Ascending aorta (tissue), 2 donors: ENCODE measurements at regions of chr19 and their contacts with region 1.

Region 1: DNA sequence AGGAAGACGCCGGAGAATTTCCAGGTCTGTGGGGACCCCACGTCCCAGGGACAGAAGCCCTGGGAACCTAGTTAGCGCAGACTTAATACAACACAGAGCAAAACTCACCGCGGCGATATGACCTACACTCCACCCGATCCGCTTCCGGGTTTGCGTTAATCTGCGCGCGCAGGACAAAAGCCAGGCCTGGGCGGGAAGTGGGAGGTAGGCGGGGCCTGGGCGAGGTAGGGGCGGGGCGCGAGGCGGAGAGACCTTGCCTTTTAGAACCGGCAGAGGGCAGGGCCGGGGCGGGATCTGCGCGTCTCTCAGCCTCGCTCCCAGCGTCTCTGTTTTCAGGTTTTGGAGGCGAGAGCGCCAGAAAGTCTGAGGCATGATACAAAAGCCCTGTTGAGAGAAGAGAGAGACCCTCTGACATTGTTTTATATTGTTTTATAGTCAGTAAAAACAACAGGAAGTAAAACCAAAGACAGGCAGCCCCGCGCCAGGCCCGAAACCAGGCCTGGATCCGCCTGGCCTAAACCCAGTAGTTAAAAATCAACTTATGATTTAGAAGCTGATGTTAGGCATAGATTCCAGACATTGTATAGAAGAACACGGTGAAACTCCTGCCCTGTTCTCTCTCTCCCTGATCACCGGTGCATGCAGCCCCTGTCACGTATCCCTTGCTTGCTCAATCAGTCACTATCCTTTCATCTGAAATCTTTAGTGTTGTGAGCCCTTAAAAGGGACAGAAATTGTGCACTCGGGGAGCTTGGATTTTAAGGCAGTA is at the start of gene ZNF611:
- DNase-seq: peak; percentile 86 to 99
- H3K4me3 ChIP-seq: peak within 1 kb of the TSS; percentile 81 to 82
- H3K27ac ChIP-seq: peak within 1 kb of the TSS; percentile 78 to 88
- H3K4me1 ChIP-seq: peaks cover 0 to 5% of the 10 kb centered on the region in 2 donors
- H3K27me3 ChIP-seq: no peaks in the 10 kb centered on the region
- CTCF ChIP-seq: peak; percentile 68 to 79 (median 74)
- total RNA-seq, gene ZNF611: 13.1 TPM

Region 2: GRCh38 chr19:52397310-52398080 is 337.6 kb before region 1 on chr19 and contains the start of gene ZNF528:
- intact Hi-C with region 1: loop called (anchors 10 kb)
- DNase-seq: peak; percentile 72 to 97
- H3K4me3 ChIP-seq: peak within 1 kb of the TSS; percentile 79 to 90
- H3K27ac ChIP-seq: peak within 1 kb of the TSS; percentile 64 to 84
- H3K4me1 ChIP-seq: peaks cover 7 to 15% of the 10 kb centered on the region in 2 donors
- H3K27me3 ChIP-seq: no peaks in the 10 kb centered on the region
- CTCF ChIP-seq: no peak
- total RNA-seq, gene ZNF528: 4.0 TPM

Region 3: GRCh38 chr19:52637718-52638585 is 97.1 kb before region 1 on chr19 and contains the start of gene ZNF83:
- intact Hi-C with region 1: loop called (anchors 2 kb)
- DNase-seq: peak; percentile 92 to 99
- H3K4me3 ChIP-seq: peak within 1 kb of the TSS; percentile 62 to 77
- H3K27ac ChIP-seq: peak within 1 kb of the TSS; percentile 87 to 92
- H3K4me1 ChIP-seq: peaks cover 0 to 14% of the 10 kb centered on the region in 2 donors
- H3K27me3 ChIP-seq: no peaks in the 10 kb centered on the region
- CTCF ChIP-seq: no peak
- total RNA-seq, gene ZNF83: 29.1 TPM

Region 4: DNA sequence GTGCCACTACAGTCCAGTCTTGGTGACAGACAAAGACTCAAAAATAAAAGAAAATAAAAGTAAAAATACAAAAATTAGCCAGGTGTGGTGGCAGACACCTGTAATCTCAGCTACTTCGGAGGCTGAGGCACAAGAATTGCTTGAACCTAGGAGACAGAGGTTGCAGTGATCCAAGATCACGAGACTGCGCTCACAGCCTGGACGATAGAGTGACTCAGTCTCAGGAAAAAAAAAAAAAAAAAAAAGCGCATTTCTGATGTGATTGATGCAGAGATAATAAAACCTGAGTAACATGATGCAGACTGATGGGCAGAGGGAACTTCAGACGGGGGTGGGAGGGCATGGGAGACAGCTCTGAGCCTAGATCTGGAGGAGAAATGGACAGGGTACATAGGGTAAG is 26.6 kb after region 1 on chr19:
- intact Hi-C with region 1: no loop called
- DNase-seq: no peak
- H3K4me3 ChIP-seq: no peak overlapping the region
- H3K27ac ChIP-seq: no peak overlapping the region
- H3K4me1 ChIP-seq: no peaks in the 10 kb centered on the region
- H3K27me3 ChIP-seq: no peaks in the 10 kb centered on the region
- CTCF ChIP-seq: no peak

Region 5: GRCh38 chr19:52786457-52787359 is 51.6 kb after region 1 on chr19 and contains the start of gene ZNF600:
- intact Hi-C with region 1: loop called (anchors 2 kb)
- DNase-seq: peak; percentile 77 to 95
- H3K4me3 ChIP-seq: peak within 1 kb of the TSS; percentile 48 to 84
- H3K27ac ChIP-seq: peak within 1 kb of the TSS; percentile 79 to 85
- H3K4me1 ChIP-seq: no peaks in the 10 kb centered on the region
- H3K27me3 ChIP-seq: no peaks in the 10 kb centered on the region
- CTCF ChIP-seq: peak; percentile 19 to 40 (median 38)
- total RNA-seq, gene ZNF600: 4.8 TPM

Region 6: GRCh38 chr19:52922841-52923777 is 188.0 kb after region 1 on chr19 and contains the start of gene ZNF888:
- intact Hi-C with region 1: loop called (anchors 1 kb)
- DNase-seq: peak; percentile 70 to 96
- H3K4me3 ChIP-seq: peak within 1 kb of the TSS; percentile 79 to 83
- H3K27ac ChIP-seq: peak within 1 kb of the TSS; percentile 88 to 91
- H3K4me1 ChIP-seq: peaks cover 0 to 8% of the 10 kb centered on the region in 2 donors
- H3K27me3 ChIP-seq: no peaks in the 10 kb centered on the region
- CTCF ChIP-seq: no peak
- total RNA-seq, gene ZNF888: 0.43 TPM